HCT116 (cell line): ENCODE measurements at regions of chr10 and their contacts with region 1.

Region 1: DNA sequence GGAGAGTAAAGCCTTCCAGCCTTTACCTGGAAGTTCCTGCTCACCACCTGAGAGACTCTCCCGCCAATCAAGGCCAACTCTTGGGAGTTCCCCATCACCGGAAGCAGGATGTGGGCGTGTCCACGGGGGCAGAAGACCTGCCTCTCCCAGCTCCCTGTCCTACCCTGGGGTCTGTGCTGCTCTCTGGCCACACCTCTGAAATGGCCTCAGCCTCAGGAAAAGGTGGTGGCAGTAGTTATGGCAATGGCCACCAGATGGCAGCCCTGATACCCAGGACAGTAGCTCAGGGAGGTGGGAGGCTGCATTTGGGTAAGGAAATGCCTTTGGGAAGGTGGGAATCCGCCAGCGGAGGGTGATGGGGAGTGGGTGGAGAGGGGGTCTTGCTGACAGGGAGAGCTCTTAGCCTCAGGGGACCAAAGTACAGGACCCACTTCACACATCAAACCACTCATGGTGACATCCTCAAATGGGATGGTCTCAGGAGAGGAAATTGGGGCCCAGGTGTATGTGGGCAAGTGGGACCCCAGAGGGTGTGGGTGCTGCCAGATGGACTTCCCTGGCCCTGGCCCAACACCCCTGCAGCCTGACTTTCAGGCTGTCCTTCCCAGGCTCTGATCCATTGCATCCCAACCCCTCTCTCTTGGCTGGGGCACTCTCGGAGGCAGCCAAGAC is 33.9 kb downstream of the KAZALD1 start:
- DNase-seq: peak; percentile 94
- ATAC-seq: peak; percentile 100
- H3K4me3 ChIP-seq: peak overlapping the region; percentile 23 to 36
- H3K27ac ChIP-seq: peak overlapping the region; percentile 20; the same call in 1 of the 2 replicates
- H3K4me1 ChIP-seq: peaks cover 0 to 24% of the 10 kb centered on the region in 2 experiments; a peak in 2 of 4 replicates
- H3K27me3 ChIP-seq: peaks cover 6% of the 10 kb centered on the region; the same call in 1 of the 2 replicates
- CTCF ChIP-seq: peak; percentile 97 to 99 (median 99)
- POLR2A ChIP-seq: no peak
- RAD21 ChIP-seq: peak; percentile 91

Region 2: GRCh38 chr10:100986952-100987750 is 108.5 kb before region 1 on chr10 and contains the starts of genes MRPL43 and TWNK:
- CTCF ChIA-PET with region 1: no interaction called
- POLR2A ChIA-PET with region 1: no interaction called
- RAD21 ChIA-PET with region 1: no interaction called
- intact Hi-C with region 1: no loop called
- DNase-seq: peak; percentile 68
- ATAC-seq: peak; percentile 86
- H3K4me3 ChIP-seq: peak within 1 kb of the TSS; percentile 82 to 96
- H3K27ac ChIP-seq: peak within 1 kb of the TSS; percentile 84
- H3K4me1 ChIP-seq: peaks cover 10 to 28% of the 10 kb centered on the region in 2 experiments; a peak in 3 of 4 replicates
- H3K27me3 ChIP-seq: no peaks in the 10 kb centered on the region
- CTCF ChIP-seq: no peak
- POLR2A ChIP-seq: peak; percentile 85
- RAD21 ChIP-seq: no peak
- total RNA-seq, gene MRPL43: 136 TPM
- total RNA-seq, gene TWNK: 42.1 TPM

Region 3: DNA sequence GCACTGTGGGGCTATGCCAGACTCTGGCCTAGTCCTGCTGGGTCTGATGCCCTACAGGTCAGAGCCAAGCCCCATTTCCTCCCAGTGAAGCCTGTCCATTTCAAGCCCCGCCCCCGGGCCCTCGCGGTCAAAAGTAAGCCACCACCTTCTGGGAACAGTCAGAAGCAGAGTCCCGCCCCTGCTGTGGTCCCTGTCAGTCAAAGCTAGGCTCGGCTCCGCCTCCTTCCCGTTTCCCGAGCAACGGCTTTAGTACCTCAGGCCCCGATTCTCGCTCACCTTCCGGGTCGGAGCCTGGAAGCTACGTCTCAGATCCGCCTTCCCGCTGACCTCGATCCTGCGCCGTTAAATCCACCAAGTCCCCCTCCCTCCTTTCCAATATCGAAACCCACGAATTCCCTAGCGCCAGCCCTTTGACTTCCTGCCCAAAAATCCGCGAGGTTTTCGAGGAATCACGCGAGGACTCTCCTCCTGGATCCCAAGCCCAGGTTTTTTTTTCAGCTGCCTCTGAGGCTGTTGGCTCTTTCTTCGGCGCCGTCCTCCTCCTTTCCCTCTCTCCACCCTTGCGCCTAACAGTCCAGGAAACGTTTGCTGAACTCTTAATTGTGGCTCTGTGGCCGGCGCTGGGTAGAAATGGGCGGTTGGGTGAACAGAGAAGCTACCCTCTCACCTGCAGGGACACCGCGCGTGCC is 52.9 kb before region 1 on chr10:
- CTCF ChIA-PET with region 1: interaction called, 34 read pairs
- POLR2A ChIA-PET with region 1: interaction called, 4 read pairs
- RAD21 ChIA-PET with region 1: no interaction called
- intact Hi-C with region 1: no loop called
- DNase-seq: peak; percentile 97
- ATAC-seq: peak; percentile 91
- H3K4me3 ChIP-seq: peak overlapping the region; percentile 55 to 59
- H3K27ac ChIP-seq: peak overlapping the region; percentile 84
- H3K4me1 ChIP-seq: peaks cover 26 to 33% of the 10 kb centered on the region in 2 experiments
- H3K27me3 ChIP-seq: no peaks in the 10 kb centered on the region
- CTCF ChIP-seq: no peak
- POLR2A ChIP-seq: peak; percentile 82
- RAD21 ChIP-seq: no peak

Region 4: GRCh38 chr10:101060036-101060950 is 35.4 kb before region 1 on chr10:
- CTCF ChIA-PET with region 1: interaction called, 38 read pairs
- POLR2A ChIA-PET with region 1: interaction called, 5 read pairs
- RAD21 ChIA-PET with region 1: interaction called in 1 of 2 experiments, 6 read pairs
- intact Hi-C with region 1: no loop called
- DNase-seq: peak; percentile 98
- ATAC-seq: peak; percentile 67
- H3K4me3 ChIP-seq: peak overlapping the region; percentile 80 to 84
- H3K27ac ChIP-seq: peak overlapping the region; percentile 99
- H3K4me1 ChIP-seq: peaks cover 42 to 51% of the 10 kb centered on the region in 2 experiments
- H3K27me3 ChIP-seq: no peaks in the 10 kb centered on the region
- CTCF ChIP-seq: peak in 2 of 3 experiments; percentile 98 to 99; a peak in 4 of 6 replicates
- POLR2A ChIP-seq: peak; percentile 37
- RAD21 ChIP-seq: no peak

Region 5: GRCh38 chr10:101075775-101076174 is 19.9 kb before region 1 on chr10:
- CTCF ChIA-PET with region 1: interaction called, 27 read pairs
- POLR2A ChIA-PET with region 1: interaction called, 3 read pairs
- RAD21 ChIA-PET with region 1: no interaction called
- intact Hi-C with region 1: no loop called
- DNase-seq: no peak
- ATAC-seq: 0 out of 2 replicates have a peak, but pooled peaks have one; percentile 16
- H3K4me3 ChIP-seq: no peak overlapping the region
- H3K27ac ChIP-seq: no peak overlapping the region
- H3K4me1 ChIP-seq: peaks cover 0 to 12% of the 10 kb centered on the region in 2 experiments; a peak in 2 of 4 replicates
- H3K27me3 ChIP-seq: peaks cover 24% of the 10 kb centered on the region
- CTCF ChIP-seq: no peak
- POLR2A ChIP-seq: no peak
- RAD21 ChIP-seq: no peak

Region 6: DNA sequence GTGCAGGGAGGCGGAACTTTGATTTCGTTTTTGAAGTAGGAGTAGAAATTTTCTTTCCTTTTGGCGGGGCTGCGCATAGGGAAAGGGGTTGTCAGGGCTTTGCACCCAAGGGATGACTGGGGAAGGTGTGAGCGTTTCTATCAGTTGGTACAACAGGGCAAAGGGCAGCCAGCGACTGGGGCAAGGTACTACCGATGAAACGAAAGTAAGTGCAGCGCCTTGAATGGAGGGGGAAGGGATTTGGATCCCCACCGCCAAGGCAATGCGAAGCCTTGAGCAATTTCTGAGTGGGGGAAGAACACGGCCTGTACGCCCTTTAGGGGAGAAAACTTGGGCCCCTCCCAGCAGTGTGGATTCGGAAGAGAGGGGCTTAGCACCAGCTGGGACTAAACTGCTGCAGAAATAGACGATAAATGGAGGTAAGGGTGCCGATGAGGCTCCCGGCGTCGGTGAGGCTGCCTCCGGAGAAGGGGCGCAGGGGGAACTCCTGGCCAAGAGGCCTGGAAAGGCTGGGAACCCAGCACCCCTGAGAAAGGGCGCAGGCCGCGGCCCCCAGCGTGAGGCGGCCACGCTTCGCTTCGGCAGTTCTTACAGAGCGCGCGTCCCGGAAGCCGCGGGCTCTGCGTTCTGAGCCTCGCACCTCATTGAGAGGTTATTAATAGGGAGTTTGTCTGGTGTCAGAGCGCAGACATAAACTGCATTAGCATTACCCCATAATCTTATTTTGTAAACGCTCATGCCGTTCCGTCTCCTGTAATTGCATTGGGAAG is 25.4 kb after region 1 on chr10:
- CTCF ChIA-PET with region 1: interaction called, 10 read pairs
- POLR2A ChIA-PET with region 1: no interaction called
- RAD21 ChIA-PET with region 1: no interaction called
- intact Hi-C with region 1: no loop called
- DNase-seq: no peak
- ATAC-seq: no peak
- H3K4me3 ChIP-seq: no peak overlapping the region
- H3K27ac ChIP-seq: no peak overlapping the region
- H3K4me1 ChIP-seq: peaks cover 0 to 12% of the 10 kb centered on the region in 2 experiments; a peak in 1 of 4 replicates
- H3K27me3 ChIP-seq: 0 out of 2 replicates have a peak, but pooled peaks cover 5% of the 10 kb centered on the region
- CTCF ChIP-seq: no peak
- POLR2A ChIP-seq: no peak
- RAD21 ChIP-seq: no peak